Brain microvascular endothelial cell (primary cell): ENCODE measurements at regions of chr3 and their contacts with region 1.

Region 1: GRCh38 chr3:49673715-49674496 is at the start of gene APEH:
- DNase-seq: peak; percentile 96
- H3K4me3 ChIP-seq: peak within 1 kb of the TSS; percentile 76
- H3K27ac ChIP-seq: peak within 1 kb of the TSS; percentile 75
- H3K27me3 ChIP-seq: no peaks in the 10 kb centered on the region
- CTCF ChIP-seq: no peak

Region 2: GRCh38 chr3:49553692-49554632 is 119.9 kb before region 1 on chr3 and contains the start of gene BSN:
- in situ Hi-C with region 1: loop called (anchors 25 kb)
- DNase-seq: peak; percentile 71
- H3K4me3 ChIP-seq: peak within 1 kb of the TSS; percentile 74
- H3K27ac ChIP-seq: peak within 1 kb of the TSS; percentile 8
- H3K27me3 ChIP-seq: peaks cover 8% of the 10 kb centered on the region
- CTCF ChIP-seq: no peak